ENCODE measurements at regions of chr1 and their contacts with region 1.

Region 1: DNA sequence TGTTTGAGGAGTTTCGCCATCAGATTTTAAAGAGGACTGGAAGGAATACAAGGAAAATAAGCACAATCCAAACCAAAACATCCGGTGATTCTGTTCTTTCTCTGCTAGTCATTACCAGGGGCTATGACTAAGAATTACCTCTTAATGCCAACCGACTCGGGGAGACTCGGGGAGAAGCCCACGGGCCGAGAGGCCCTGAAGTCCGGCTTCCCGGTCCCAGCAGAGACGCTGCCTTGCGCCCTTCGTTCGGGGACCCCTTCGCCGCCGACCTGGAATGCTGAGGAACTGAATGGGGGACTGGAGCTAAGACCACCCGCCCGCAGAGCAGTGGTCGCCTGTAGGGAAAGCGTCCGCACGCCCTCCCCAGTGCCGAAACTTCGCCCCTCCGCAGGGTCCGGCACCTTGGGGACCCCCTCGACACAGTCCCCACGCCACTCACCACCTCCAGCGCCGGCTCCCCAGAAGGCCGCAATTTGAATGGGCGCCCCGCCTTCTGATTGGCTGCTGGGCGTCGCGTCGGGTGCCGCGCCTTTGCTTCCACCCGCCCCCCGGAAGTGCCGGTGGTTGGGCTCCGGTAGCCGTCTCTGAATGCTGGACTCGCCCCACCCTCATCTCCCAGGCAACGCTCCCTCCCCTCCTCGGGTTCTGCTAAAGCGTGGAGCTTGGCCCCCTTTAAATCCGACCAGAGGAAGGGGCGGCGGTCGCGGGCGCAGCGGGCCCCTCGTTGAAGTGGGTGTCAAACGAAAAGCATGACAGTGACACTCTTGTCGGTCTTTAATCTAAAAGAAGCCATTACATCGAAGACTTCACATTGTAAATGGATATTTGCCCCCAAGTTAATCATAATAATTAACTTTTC is at the start of gene KIF14:
- DNase-seq: peak; percentile 89
- H3K4me3 ChIP-seq: peak within 1 kb of the TSS; percentile 58 to 94 (median 81)
- H3K27ac ChIP-seq: peak within 1 kb of the TSS; percentile 95
- H3K4me1 ChIP-seq: peaks cover 16% of the 10 kb centered on the region
- H3K27me3 ChIP-seq: no peaks in the 10 kb centered on the region
- CTCF ChIP-seq: no peak
- POLR2A ChIP-seq: peak; percentile 51
- total RNA-seq, gene KIF14: 12.6 and 13.8 TPM in 2 replicates

Region 2: GRCh38 chr1:200654660-200655059 is 34.2 kb after region 1 on chr1:
- CTCF ChIA-PET with region 1: interaction called, 12 read pairs
- POLR2A ChIA-PET with region 1: no interaction called
- dilution Hi-C with region 1: no loop called
- intact Hi-C with region 1: no loop called
- DNase-seq: no peak
- H3K4me3 ChIP-seq: no peak overlapping the region
- H3K27ac ChIP-seq: no peak overlapping the region
- H3K4me1 ChIP-seq: no peaks in the 10 kb centered on the region
- H3K27me3 ChIP-seq: no peaks in the 10 kb centered on the region
- CTCF ChIP-seq: no peak
- POLR2A ChIP-seq: no peak

Region 3: DNA sequence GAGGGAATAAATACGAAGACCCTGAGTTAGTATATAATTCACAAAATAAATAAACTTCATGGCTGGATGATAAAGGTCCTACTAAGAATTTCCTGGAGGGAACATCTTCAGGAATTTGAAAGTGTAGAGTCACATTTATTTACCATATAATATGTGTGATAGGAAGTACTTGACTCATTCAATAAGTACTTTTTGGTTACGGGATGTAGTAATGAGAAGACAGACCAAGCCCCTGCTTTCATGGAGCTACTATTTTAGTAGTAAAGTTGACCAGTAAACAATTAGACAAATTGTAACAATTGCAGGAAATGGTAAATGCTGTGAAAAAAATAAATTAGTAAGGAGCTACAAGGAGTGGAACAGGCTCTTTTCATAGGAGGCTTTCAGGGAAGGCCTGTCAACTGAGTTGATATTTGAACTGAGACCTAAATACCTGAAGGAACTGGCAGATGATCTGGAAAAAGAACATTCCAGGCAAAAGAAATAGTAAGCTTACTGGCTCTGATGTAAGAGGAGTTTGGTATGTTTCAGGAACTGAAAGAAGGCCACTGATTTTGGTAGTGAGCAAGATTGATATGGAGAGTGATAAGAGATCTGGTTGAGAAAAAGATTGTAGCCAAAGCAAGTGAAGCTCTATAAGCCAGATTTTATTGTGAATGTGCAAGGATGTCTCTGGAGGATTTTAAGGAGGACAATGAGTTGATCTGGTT is 154.4 kb after region 1 on chr1:
- CTCF ChIA-PET with region 1: interaction called, 38 read pairs
- POLR2A ChIA-PET with region 1: no interaction called
- dilution Hi-C with region 1: loop called (anchors 25 kb)
- intact Hi-C with region 1: no loop called
- DNase-seq: peak; percentile 18
- H3K4me3 ChIP-seq: no peak overlapping the region
- H3K27ac ChIP-seq: peak overlapping the region; percentile 11
- H3K4me1 ChIP-seq: peaks cover 19% of the 10 kb centered on the region
- H3K27me3 ChIP-seq: no peaks in the 10 kb centered on the region
- CTCF ChIP-seq: no peak
- POLR2A ChIP-seq: no peak

Region 4: DNA sequence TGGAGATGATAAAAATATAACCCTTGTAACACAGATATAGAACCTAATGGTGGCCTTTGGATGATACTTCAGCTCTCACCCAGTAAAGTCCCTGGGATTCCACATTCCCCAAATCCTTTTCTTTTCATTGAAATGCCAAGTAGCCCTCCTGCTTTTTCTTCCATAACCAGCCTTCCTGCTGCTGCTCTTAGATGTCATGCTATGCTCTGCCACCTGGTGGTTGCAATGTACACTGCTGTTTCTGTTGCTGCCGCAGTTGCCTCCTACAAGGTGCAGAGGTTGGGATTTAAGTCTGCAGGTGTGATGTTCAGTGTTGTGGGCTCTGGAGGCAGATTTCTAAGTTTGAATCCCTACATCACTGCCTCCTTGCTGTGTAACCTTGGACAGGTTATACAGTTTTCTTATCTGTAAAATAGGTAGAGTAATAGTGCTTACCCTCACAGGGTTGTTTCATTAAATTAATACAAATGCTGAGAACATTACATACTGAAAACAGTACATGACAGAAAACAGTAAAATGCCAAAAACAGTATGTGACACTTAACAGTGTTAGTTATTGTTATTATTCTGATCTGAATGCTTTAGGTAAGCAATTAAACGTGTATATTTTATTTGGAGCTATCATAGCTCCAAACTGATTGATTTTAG is 182.5 kb after region 1 on chr1:
- CTCF ChIA-PET with region 1: interaction called, 177 read pairs
- POLR2A ChIA-PET with region 1: interaction called, 3 read pairs
- dilution Hi-C with region 1: loop called (anchors 25 kb)
- intact Hi-C with region 1: loop called (anchors 1 kb)
- DNase-seq: peak; percentile 84
- H3K4me3 ChIP-seq: no peak overlapping the region
- H3K27ac ChIP-seq: no peak overlapping the region
- H3K4me1 ChIP-seq: no peaks in the 10 kb centered on the region
- H3K27me3 ChIP-seq: no peaks in the 10 kb centered on the region
- CTCF ChIP-seq: peak; percentile 85 to 87
- POLR2A ChIP-seq: no peak

Region 5: DNA sequence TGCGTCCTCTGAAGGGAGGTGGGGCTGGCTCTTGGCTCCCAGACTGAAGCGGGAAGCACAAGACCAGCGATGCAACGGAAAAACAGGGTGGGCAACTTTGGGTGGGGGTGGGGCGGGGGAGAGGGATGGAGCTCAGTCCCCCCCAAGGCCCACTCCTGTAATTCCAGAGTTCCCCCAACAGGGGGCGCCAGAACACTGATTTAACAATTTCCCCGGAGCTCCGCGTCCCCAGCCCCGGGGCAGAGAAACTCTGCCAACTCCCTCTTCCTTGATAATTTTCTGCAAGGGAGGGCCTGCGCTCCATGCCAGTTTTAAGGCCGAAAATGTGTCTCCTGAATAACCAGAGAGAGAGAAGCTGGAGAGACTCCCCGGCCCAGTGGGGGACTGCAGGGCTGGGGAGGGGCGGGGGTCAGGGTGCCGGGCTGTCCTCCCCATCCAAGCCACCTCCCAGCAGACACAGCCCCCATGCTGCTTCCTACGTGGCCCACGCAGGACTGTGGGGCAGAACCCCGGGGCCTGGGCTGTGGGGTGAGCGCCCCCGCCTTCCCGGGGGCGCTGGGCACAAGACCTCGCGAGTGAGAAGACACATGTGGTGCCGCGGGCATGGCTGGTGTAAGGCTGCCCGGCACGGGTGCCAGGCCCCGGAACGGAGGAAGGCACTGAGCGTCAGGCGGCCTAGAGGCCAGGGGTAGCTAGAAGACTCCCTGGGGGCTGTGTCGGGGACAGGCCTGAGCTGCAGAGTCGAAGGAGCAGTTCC is 351.6 kb after region 1 on chr1:
- CTCF ChIA-PET with region 1: interaction called, 19 read pairs
- POLR2A ChIA-PET with region 1: no interaction called
- dilution Hi-C with region 1: no loop called
- intact Hi-C with region 1: loop called (anchors 5 kb)
- DNase-seq: peak; percentile 39
- H3K4me3 ChIP-seq: no peak overlapping the region
- H3K27ac ChIP-seq: no peak overlapping the region
- H3K4me1 ChIP-seq: no peaks in the 10 kb centered on the region
- H3K27me3 ChIP-seq: no peaks in the 10 kb centered on the region
- CTCF ChIP-seq: peak; percentile 52 to 72
- POLR2A ChIP-seq: no peak

Region 6: DNA sequence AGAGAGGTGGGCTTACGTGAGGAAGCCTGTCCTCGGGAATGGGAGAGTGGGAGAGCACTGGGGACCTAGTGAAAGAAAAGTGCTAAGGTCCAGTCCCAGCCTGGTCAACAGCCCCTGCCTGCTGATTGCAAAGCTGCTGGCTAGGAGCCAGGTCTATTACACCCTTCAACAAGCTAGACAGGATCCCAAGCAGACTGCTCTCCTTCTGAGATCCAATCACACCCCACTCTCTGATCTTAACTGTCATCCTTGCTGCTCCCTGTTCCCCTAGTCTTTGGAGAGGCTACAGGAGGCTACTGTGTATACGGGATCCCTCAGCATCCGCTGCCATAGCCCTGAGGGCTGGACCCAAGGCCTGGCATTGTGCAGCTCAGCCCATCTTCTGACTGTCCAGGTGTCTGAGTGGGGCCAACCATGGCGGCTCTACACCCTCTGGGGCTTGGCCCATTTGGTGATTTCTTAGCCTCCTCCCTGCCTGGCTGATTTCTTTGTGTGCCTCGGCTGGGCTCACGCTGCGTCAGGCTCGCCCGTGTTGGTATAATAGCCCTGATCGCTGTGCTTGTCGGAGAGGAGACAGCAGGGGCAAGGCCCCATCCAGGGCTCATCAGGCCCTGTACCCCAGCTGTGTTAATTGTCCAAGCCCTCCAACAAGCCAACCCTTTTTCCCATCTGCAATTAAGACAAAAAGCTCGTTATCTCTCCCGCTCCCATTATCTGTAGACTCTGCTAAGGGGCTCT is 962.4 kb after region 1 on chr1:
- CTCF ChIA-PET with region 1: no interaction called
- POLR2A ChIA-PET with region 1: no interaction called
- dilution Hi-C with region 1: no loop called
- intact Hi-C with region 1: no loop called
- DNase-seq: no peak
- H3K4me3 ChIP-seq: no peak overlapping the region
- H3K27ac ChIP-seq: no peak overlapping the region
- H3K4me1 ChIP-seq: no peaks in the 10 kb centered on the region
- H3K27me3 ChIP-seq: no peaks in the 10 kb centered on the region
- CTCF ChIP-seq: no peak
- POLR2A ChIP-seq: no peak

Measured in endothelial cell of umbilical vein (primary cell).